CD8-positive, alpha-beta T cell (primary cell): ENCODE measurements at regions of chr9 and their contacts with region 1.

Region 1: DNA sequence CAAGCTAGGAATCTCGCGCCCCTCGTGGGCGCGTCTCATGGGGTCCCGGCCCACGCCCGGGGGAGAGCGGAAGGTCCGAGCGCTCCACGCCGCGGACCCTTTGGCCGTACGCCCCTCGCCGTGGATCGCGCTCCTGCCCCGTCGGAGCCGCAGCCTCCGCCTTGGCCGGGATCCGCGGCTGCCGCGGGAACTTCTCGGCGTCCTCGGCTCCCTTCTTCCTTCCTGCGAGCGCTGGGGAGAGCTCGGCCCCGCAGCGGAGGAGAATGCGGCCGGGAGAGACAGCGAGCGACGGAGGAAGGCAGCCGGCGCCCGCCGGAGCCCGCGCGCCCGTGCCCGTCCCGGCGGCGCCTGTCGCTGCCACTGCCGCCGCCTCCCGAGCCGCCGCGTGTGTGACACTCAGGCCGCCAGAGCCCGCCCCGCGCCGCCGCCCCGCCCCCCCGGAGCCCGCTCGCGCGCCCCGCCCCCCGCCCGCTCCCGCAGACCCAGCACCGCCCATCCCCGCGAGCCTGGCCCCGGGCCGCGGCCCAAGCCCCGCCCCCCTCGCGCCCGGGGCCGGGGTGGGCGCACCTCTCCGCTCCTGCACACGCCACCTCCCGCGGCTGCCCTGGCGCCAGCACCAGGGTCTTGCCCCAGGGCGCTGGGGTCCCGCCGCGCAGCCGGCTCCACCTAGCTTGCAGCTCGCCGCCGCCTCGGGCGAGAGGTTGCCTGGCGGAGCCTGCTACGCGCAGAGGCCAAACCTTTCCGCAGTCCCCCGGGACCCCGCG is at the start of gene SHB:
- DNase-seq: peak; percentile 68 to 90 (median 83)
- ATAC-seq: peak; percentile 81
- H3K4me3 ChIP-seq: peak within 1 kb of the TSS; percentile 78 to 88
- H3K4me3 Mint-ChIP-seq: peak within 1 kb of the TSS; percentile 85
- H3K27ac ChIP-seq: peak within 1 kb of the TSS; percentile 39 to 42
- H3K27ac Mint-ChIP-seq: peak within 1 kb of the TSS; percentile 74
- H3K4me1 ChIP-seq: peaks cover 24% of the 10 kb centered on the region
- H3K4me1 Mint-ChIP-seq: peaks cover 24% of the 10 kb centered on the region
- H3K27me3 ChIP-seq: peaks cover 3 to 4% of the 10 kb centered on the region in 2 experiments
- H3K27me3 Mint-ChIP-seq: no peaks in the 10 kb centered on the region
- CTCF ChIP-seq: peak; percentile 26
- total RNA-seq, gene SHB: 2.4 to 3.0 TPM

Region 2: DNA sequence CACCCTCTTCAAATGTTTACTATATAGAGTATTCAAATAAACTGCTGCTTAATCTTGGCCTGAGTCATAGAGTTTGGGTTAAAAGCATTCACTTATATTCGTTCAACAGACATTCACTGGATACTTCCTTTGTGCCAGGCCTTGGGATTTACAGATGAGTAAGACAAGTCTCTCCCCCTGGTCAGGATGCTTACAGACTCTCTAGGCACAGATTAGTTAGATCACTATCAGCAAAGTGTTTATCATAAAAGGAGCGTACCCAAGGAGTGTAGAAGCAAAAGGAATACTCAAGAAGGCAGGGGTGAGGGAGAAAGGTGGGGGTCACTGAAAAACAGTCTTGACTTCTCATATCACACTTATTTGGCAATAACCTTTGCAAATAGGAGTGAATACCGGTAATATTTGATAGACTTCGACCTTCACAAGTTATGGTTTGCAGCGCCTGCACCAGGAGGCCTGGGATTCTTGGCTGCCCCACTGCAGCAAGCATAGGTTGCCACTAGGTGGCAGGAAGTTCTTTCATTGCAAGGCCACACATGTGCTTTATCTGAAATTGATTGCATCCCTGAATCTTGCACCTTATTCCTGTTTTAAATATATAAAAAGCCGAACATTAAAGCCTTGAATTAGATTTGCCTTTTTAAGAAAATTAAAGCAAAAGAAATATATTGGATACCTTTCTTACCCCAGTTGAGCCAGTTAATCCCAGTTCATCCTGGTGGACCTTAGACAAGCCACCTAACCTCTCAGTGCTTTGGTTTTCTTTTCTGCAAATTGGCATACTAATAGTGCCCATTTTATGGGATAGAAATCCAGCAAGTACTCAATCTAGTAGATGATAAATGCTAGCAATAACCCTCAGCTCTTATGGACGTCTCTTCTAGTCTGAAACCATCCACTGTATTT is 321.9 kb before region 1 on chr9:
- CTCF ChIA-PET with region 1: no interaction called
- POLR2A ChIA-PET with region 1: no interaction called
- intact Hi-C with region 1: loop called in 1 of 2 experiments (anchors 5 kb)
- DNase-seq: peak; percentile 14 to 69 (median 51)
- ATAC-seq: peak; percentile 93
- H3K4me3 ChIP-seq: no peak overlapping the region
- H3K4me3 Mint-ChIP-seq: no peak overlapping the region
- H3K27ac ChIP-seq: no peak overlapping the region
- H3K27ac Mint-ChIP-seq: no peak overlapping the region
- H3K4me1 ChIP-seq: no peaks in the 10 kb centered on the region
- H3K4me1 Mint-ChIP-seq: no peaks in the 10 kb centered on the region
- H3K27me3 ChIP-seq: no peaks in the 10 kb centered on the region
- H3K27me3 Mint-ChIP-seq: no peaks in the 10 kb centered on the region
- CTCF ChIP-seq: peak; percentile 86

Region 3: GRCh38 chr9:37784616-37785483 is 284.2 kb before region 1 on chr9 and contains the start of gene EXOSC3:
- CTCF ChIA-PET with region 1: no interaction called
- POLR2A ChIA-PET with region 1: no interaction called
- intact Hi-C with region 1: loop called in 1 of 2 experiments (anchors 10 kb)
- DNase-seq: peak; percentile 58 to 92 (median 84)
- ATAC-seq: peak; percentile 83
- H3K4me3 ChIP-seq: peak within 1 kb of the TSS; percentile 98
- H3K4me3 Mint-ChIP-seq: peak within 1 kb of the TSS; percentile 97
- H3K27ac ChIP-seq: peak within 1 kb of the TSS; percentile 75 to 88
- H3K27ac Mint-ChIP-seq: peak within 1 kb of the TSS; percentile 96
- H3K4me1 ChIP-seq: peaks cover 24% of the 10 kb centered on the region
- H3K4me1 Mint-ChIP-seq: peaks cover 42% of the 10 kb centered on the region
- H3K27me3 ChIP-seq: no peaks in the 10 kb centered on the region
- H3K27me3 Mint-ChIP-seq: peaks cover 4% of the 10 kb centered on the region
- CTCF ChIP-seq: no peak
- total RNA-seq, gene EXOSC3: 34.2 to 45.9 TPM

Region 4: DNA sequence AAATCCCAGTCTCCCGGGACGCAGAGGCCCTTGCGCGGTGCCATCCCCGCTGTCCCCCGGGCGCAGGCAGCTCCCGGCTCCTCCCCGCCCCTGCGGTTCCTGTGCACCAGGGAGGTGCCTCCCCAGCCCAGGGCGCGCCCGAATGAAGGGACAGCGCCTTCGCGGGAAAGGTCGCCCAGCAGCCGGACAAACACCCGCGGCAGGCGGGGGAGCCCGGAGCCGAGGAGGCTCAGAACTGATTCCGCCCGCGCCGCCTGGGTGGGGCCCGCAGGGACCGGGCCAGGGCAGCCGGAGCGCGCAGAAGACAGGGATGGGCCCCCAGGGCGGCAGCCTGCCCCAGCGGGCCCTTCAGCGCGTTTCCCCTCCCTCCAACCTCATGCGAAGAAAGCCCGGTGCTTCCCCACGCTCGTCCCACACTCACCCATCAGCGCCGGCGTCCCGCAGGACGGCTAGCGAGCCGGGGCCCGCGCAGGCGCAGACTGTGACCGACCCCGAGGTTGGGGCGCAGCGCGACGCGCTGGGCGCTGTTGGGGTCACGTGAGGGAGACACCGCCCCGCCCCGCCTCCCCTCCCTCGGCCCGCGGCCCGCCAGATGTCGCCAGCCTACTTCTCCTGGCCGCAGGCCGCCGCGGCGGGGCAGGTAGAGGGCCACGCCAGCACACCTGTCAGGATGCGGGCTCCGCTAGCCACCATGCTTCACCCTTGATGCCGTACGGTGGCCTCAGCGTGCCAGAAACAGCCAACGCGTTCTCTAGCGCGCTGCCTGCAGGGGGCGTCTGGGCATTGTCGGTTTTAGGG is 165.2 kb before region 1 on chr9 and contains the start of gene SLC25A51:
- CTCF ChIA-PET with region 1: interaction called, 4 read pairs
- POLR2A ChIA-PET with region 1: no interaction called
- intact Hi-C with region 1: loop called (anchors 1 kb)
- DNase-seq: peak; percentile 94 to 99 (median 96)
- ATAC-seq: peak; percentile 87
- H3K4me3 ChIP-seq: peak within 1 kb of the TSS; percentile 65 to 89
- H3K4me3 Mint-ChIP-seq: peak within 1 kb of the TSS; percentile 91
- H3K27ac ChIP-seq: peak within 1 kb of the TSS; percentile 62 to 73
- H3K27ac Mint-ChIP-seq: peak within 1 kb of the TSS; percentile 94
- H3K4me1 ChIP-seq: peaks cover 22% of the 10 kb centered on the region
- H3K4me1 Mint-ChIP-seq: peaks cover 30% of the 10 kb centered on the region
- H3K27me3 ChIP-seq: no peaks in the 10 kb centered on the region
- H3K27me3 Mint-ChIP-seq: no peaks in the 10 kb centered on the region
- CTCF ChIP-seq: peak; percentile 86
- total RNA-seq, gene SLC25A51: 14.7 to 15.2 TPM